WTC11 (cell line): ENCODE measurements at regions of chr1 and their contacts with region 1.

Region 1: GRCh38 chr1:53715478-53715877 is 23.5 kb downstream of the GLIS1 start:
- DNase-seq: peak; percentile 79
- ATAC-seq: peak; percentile 98
- H3K4me3 Mint-ChIP-seq: no peak overlapping the region
- H3K27ac Mint-ChIP-seq: no peak overlapping the region
- H3K4me1 Mint-ChIP-seq: no peaks in the 10 kb centered on the region; the same call in 1 of the 2 replicates
- H3K27me3 Mint-ChIP-seq: no peaks in the 10 kb centered on the region; the same call in 1 of the 2 replicates
- CTCF ChIP-seq: 0 out of 2 replicates have a peak, but pooled peaks have one; percentile 49

Region 2: GRCh38 chr1:53606651-53607051 is 108.8 kb before region 1 on chr1:
- CTCF ChIA-PET with region 1: interaction called, 10 read pairs
- POLR2A ChIA-PET with region 1: no interaction called
- DNase-seq: peak; percentile 45
- ATAC-seq: peak; percentile 96
- H3K4me3 Mint-ChIP-seq: no peak overlapping the region
- H3K27ac Mint-ChIP-seq: no peak overlapping the region
- H3K4me1 Mint-ChIP-seq: peaks cover 6% of the 10 kb centered on the region; the same call in 1 of the 2 replicates
- H3K27me3 Mint-ChIP-seq: peaks cover 5% of the 10 kb centered on the region; the same call in 1 of the 2 replicates
- CTCF ChIP-seq: no peak

Region 3: DNA sequence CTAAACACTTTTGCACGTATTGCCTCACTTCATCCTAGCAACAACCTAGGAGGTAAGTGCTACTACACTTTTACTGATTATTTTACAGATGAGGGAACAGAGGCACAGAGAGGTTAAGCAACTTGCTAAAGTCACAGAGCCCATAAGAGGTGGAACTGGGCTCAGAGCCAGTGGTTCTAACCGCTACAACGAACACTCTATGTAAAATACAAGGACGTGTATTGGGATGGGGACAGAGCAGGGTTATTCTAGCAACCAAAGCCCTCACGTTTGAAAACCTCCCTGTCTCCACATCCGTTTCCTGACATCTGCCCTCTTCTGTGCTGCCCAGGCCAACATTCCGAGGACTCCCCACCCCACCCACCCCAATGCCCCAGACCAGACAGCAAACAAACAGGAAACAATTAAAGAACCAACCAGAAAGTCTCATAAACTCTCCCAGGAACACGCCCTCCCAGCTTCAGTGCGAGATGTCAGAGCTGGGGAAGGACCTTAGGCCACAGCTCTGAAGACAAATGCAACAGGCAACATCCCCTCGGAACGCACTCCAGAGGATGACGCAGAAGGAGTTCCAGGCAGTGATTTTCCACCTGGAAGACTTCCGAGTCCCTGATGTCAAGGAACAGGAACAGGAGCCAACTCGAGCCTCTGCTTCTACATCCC is 17.6 kb before region 1 on chr1:
- CTCF ChIA-PET with region 1: interaction called, 51 read pairs
- POLR2A ChIA-PET with region 1: no interaction called
- DNase-seq: no peak
- ATAC-seq: no peak
- H3K4me3 Mint-ChIP-seq: no peak overlapping the region
- H3K27ac Mint-ChIP-seq: no peak overlapping the region
- H3K4me1 Mint-ChIP-seq: peaks cover 15% of the 10 kb centered on the region
- H3K27me3 Mint-ChIP-seq: no peaks in the 10 kb centered on the region
- CTCF ChIP-seq: no peak

Region 4: DNA sequence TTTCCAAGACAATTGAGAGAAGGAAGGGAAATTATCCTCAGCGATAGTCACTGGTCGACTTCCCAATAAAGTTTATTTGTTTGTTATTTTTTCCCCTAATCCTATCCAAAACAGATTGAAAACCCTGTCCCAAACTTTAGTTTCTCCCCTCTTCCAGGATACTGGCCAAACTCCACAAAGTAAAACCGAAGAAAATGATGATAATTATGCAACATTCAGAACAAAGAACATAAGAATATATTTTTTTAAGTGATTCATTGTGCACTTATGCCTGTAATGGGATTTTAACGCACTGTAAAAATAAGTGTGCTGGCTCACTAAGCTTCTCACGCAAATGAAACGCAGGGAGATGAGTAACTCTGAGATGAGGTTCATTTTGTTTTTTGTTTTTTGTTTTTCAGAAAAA is 17.4 kb after region 1 on chr1:
- CTCF ChIA-PET with region 1: interaction called, 15 read pairs
- POLR2A ChIA-PET with region 1: interaction called, 3 read pairs
- DNase-seq: no peak
- ATAC-seq: no peak
- H3K4me3 Mint-ChIP-seq: no peak overlapping the region
- H3K27ac Mint-ChIP-seq: no peak overlapping the region
- H3K4me1 Mint-ChIP-seq: peaks cover 7% of the 10 kb centered on the region
- H3K27me3 Mint-ChIP-seq: peaks cover 41% of the 10 kb centered on the region
- CTCF ChIP-seq: no peak

Region 5: GRCh38 chr1:53765657-53766056 is 50.2 kb after region 1 on chr1:
- CTCF ChIA-PET with region 1: no interaction called
- POLR2A ChIA-PET with region 1: no interaction called
- DNase-seq: no peak
- ATAC-seq: no peak
- H3K4me3 Mint-ChIP-seq: no peak overlapping the region
- H3K27ac Mint-ChIP-seq: no peak overlapping the region
- H3K4me1 Mint-ChIP-seq: no peaks in the 10 kb centered on the region
- H3K27me3 Mint-ChIP-seq: no peaks in the 10 kb centered on the region
- CTCF ChIP-seq: no peak